Activated naive CD4-positive, alpha-beta T cell treated with anti-CD3 and anti-CD28 coated beads, Interleukin-2, amount 10 ng/mL, durations not matched to agents 7 days and 5 days (primary cell): ENCODE measurements at regions of chr1 and their contacts with region 1.

Region 1: GRCh38 chr1:39098546-39099250 is 72.5 kb downstream of the NDUFS5 start:
- DNase-seq: peak; percentile 74
- H3K4me3 Mint-ChIP-seq: no peak overlapping the region
- H3K27ac Mint-ChIP-seq: no peak overlapping the region
- H3K4me1 Mint-ChIP-seq: peaks cover 21% of the 10 kb centered on the region
- H3K27me3 Mint-ChIP-seq: peaks cover 22% of the 10 kb centered on the region

Region 2: DNA sequence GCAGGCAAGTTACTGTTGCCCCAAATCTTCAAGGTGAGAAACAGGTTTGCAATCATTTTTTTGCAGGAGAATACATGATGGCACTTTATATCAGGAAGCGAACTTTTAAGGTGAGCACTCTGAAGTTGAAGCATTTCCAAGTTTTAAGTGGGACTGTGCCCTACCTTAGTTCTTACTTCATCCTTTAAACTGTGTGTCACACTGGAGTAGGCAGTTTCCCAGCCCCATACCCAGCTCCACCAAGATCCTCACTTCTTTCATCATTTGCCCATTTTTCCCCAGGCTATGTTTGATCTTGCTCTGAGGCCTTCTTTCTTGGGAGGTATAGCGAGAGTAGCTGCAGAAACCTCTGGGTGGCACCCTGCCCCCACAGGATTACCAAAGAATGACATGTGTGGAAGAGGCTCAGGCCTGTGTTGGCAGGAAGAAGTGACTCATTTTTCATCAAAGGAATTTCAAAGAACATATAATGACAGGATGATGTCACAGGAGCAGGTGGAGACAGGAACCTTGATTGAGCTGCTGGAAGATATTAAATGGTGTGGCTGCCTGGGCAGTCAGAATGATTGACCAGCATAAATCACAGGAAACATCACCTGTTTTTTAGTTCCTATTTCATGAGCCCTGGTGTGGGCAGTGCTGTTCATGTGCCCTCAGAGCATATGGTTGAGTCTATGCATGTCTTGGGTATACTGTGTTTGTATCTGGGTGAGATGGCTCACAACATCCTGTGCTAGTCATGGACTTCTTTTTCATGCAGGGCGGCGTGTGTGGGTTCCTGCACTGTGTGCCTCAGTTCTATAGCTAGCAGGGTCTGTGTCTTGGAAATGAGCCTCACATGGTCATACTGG is 85.0 kb after region 1 on chr1:
- CTCF ChIA-PET with region 1: interaction called, 149 read pairs
- DNase-seq: peak; percentile 91
- H3K4me3 Mint-ChIP-seq: peak overlapping the region; percentile 11
- H3K27ac Mint-ChIP-seq: peak overlapping the region; percentile 91
- H3K4me1 Mint-ChIP-seq: peaks cover 49% of the 10 kb centered on the region
- H3K27me3 Mint-ChIP-seq: no peaks in the 10 kb centered on the region

Region 3: GRCh38 chr1:39189592-39190041 is 90.9 kb after region 1 on chr1:
- CTCF ChIA-PET with region 1: interaction called, 149 read pairs
- DNase-seq: no peak
- H3K4me3 Mint-ChIP-seq: no peak overlapping the region
- H3K27ac Mint-ChIP-seq: peak overlapping the region; percentile 47
- H3K4me1 Mint-ChIP-seq: peaks cover 85% of the 10 kb centered on the region
- H3K27me3 Mint-ChIP-seq: no peaks in the 10 kb centered on the region

Region 4: DNA sequence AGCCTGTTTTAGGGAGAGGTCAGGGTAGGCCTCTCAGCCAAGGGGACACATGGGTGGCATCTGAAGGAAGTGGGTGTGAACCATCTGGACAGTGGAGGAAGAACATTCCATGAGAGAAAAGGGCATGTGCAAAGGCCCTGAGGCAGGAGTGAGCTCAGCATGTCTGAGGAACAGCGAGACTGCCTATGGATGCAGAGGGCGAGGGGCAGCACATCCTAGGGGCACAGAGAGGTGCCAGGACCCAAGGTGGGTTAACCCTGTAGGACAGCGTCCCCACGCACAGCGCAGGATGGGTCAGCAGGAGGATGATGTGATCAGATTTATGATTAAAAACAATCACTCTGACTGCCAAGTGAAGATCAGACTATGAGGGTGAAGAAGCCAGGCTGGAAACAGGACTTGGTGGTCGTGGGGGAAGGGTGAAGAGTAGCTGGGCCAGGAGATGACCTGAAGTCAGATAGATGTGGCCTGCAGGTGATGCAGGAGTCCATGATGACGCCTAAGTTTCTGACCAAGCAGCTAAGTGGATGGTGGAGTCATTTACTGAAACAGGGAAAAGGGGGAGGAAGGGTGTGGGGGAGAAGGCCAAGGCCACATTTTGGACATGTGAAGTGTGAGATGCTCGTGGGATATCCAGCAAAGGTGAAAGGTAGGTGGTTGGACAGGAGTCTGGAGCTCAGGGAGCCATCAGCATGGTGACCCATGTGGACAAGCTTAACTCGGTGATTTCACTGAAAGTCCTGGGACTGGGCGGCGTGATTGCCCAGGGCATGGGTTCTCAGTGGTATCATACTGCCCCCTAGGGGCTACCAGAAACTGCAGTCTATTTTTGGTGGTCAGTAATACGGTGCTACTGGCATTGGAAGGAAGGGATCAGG is 440.1 kb after region 1 on chr1:
- CTCF ChIA-PET with region 1: interaction called, 30 read pairs
- DNase-seq: peak; percentile 62
- H3K4me3 Mint-ChIP-seq: no peak overlapping the region
- H3K27ac Mint-ChIP-seq: peak overlapping the region; percentile 78
- H3K4me1 Mint-ChIP-seq: no peaks in the 10 kb centered on the region
- H3K27me3 Mint-ChIP-seq: no peaks in the 10 kb centered on the region